ENCODE measurements at regions of chr20 and their contacts with region 1.

Region 1: DNA sequence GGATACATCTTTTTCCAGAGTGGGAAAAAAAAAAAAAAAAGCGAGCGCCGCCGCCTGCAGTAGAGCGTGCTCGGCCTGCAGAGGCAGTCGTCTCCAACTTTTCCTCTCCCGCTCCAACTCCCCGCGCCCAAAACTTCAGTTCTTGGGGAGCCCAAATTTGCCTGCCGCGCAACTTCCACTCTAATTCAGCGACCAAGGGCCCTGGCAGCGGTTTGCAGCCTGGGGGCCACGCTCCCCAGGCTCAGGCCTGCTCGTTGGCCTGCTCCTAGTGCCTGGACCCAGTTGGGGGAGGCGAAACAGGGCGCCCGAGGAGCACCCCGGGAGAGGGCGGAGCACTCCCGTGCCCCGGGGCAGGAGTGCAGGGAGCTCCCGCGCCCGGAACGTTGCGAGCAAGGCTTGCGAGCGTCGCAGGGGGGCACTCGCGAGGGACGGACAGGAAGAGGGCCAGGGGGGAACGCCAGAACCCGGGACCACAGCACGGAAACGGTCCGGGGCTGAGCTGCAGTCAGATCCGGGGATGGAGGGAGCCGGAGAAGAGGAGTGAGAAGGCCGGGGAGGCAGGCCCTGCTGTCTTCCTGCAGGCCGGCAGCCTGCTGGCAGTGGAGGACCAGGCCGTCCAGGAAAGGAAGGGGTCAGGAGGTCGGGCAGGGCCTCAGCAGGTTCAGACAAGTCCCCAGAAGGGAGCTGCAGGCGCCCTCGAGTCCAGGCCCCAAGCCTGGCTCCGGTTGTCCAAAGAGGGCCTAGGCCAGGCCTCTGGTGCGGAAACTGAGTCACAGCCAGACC is at the start of gene STX16:
- DNase-seq: peak; percentile 93
- H3K4me3 ChIP-seq: peak within 1 kb of the TSS; percentile 62 to 98 (median 92)
- H3K27ac ChIP-seq: peak within 1 kb of the TSS; percentile 96 to 99 (median 98)
- H3K4me1 ChIP-seq: peaks cover 10 to 37% (median 23%) of the 10 kb centered on the region in 4 donors
- H3K27me3 ChIP-seq: no peaks in the 10 kb centered on the region
- CTCF ChIP-seq: peak; percentile 54 to 90 (median 72)
- EP300 ChIP-seq: no peak
- POLR2A ChIP-seq: peak; percentile 87
- total RNA-seq, gene STX16: 52.3 to 146 (median 77.0) TPM

Region 2: GRCh38 chr20:58236612-58237330 is 414.2 kb before region 1 on chr20:
- in situ Hi-C with region 1: loop called in 2 of 4 experiments (anchors 25 kb)
- intact Hi-C with region 1: loop called (anchors 10 kb)
- DNase-seq: peak; percentile 74
- H3K4me3 ChIP-seq: peak overlapping the region; percentile 6 to 58 (median 42)
- H3K27ac ChIP-seq: peak overlapping the region in 3 of 4 donors; percentile 19 to 32 (median 28)
- H3K4me1 ChIP-seq: peaks cover 0 to 8% (median 0%) of the 10 kb centered on the region in 4 donors
- H3K27me3 ChIP-seq: no peaks in the 10 kb centered on the region
- CTCF ChIP-seq: peak; percentile 86 to 98 (median 96)
- EP300 ChIP-seq: no peak
- POLR2A ChIP-seq: no peak

Region 3: DNA sequence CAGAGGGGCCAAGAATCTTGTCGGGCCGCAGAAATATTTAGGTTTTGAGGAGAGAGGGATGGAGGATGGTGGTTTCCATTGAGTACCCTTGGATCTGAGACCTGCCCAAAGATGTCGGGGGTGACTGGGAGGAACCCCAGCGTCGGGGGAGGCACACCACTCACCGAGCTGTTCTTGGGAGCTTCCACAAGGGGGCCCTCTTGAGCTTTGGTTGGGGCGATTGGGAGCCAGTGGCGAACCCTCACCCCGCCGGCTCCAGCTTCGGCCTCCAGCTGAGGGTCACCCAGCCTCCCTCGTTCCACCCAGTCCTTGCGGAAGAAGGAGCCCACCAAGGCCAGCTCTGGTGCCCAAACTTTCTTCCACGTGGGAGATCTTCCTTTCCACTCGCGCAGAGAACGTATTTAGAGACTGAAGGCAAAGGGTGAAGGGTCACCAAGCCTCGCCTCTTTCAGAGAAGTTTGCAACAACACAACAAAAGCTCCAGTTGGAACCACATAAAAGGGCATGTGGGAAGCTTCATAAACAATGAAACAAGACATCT is 169.4 kb before region 1 on chr20:
- in situ Hi-C with region 1: no loop called
- intact Hi-C with region 1: loop called (anchors 2 kb)
- DNase-seq: peak; percentile 59
- H3K4me3 ChIP-seq: peak overlapping the region in 1 of 4 donors; percentile 18
- H3K27ac ChIP-seq: peak overlapping the region in 2 of 4 donors; percentile 50 to 59
- H3K4me1 ChIP-seq: peaks cover 6 to 9% (median 8%) of the 10 kb centered on the region in 4 donors
- H3K27me3 ChIP-seq: no peaks in the 10 kb centered on the region
- CTCF ChIP-seq: peak; percentile 60 to 84 (median 70)
- EP300 ChIP-seq: no peak
- POLR2A ChIP-seq: no peak

Region 4: GRCh38 chr20:58692594-58693226 is 41.7 kb after region 1 on chr20 and contains the start of gene NPEPL1:
- in situ Hi-C with region 1: no loop called
- intact Hi-C with region 1: loop called (anchors 2 kb)
- DNase-seq: peak; percentile 79
- H3K4me3 ChIP-seq: peak within 1 kb of the TSS; percentile 46 to 53 (median 48)
- H3K27ac ChIP-seq: peak within 1 kb of the TSS; percentile 87 to 96 (median 92)
- H3K4me1 ChIP-seq: peaks cover 15 to 34% (median 25%) of the 10 kb centered on the region in 4 donors
- H3K27me3 ChIP-seq: no peaks in the 10 kb centered on the region
- CTCF ChIP-seq: peak in 1 of 5 experiments; percentile 7
- EP300 ChIP-seq: no peak
- POLR2A ChIP-seq: no peak
- total RNA-seq, gene NPEPL1: 33.3 to 109 (median 66.9) TPM

Region 5: DNA sequence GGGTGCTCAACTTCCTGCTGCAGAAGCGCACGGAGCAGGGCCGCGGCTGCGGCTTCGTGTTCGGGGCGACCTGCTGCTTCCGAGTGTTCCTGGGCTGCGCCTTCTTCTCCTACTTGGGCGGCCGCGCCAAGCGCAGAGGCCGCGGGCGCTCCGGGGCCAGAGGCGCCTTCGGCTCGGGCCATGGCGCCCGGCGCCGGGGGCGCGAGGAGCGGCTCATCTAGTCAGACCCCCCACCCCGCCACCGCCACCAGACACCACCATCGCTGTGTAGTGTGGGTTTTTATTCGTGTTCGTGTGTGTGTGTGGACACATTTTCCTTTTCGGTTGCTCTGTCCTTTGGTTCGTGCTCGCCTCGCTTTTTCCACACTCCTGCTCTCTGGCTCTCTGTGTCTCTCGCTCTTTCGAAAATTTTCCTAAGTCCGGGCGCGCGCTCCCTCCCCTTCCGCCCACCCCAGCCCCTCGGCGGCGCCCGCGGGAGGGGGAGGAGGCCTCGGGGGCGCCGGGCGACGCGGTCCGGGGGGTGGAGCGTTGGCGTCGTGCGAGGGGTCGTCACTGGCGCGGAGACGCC is 239.6 kb after region 1 on chr20:
- in situ Hi-C with region 1: no loop called
- intact Hi-C with region 1: loop called (anchors 5 kb)
- DNase-seq: peak; percentile 75
- H3K4me3 ChIP-seq: peak overlapping the region; percentile 55 to 100 (median 90)
- H3K27ac ChIP-seq: peak overlapping the region; percentile 99 to 100 (median 100)
- H3K4me1 ChIP-seq: peaks cover 15 to 38% (median 25%) of the 10 kb centered on the region in 4 donors
- H3K27me3 ChIP-seq: no peaks in the 10 kb centered on the region
- CTCF ChIP-seq: no peak
- EP300 ChIP-seq: no peak
- POLR2A ChIP-seq: peak; percentile 50

Region 6: DNA sequence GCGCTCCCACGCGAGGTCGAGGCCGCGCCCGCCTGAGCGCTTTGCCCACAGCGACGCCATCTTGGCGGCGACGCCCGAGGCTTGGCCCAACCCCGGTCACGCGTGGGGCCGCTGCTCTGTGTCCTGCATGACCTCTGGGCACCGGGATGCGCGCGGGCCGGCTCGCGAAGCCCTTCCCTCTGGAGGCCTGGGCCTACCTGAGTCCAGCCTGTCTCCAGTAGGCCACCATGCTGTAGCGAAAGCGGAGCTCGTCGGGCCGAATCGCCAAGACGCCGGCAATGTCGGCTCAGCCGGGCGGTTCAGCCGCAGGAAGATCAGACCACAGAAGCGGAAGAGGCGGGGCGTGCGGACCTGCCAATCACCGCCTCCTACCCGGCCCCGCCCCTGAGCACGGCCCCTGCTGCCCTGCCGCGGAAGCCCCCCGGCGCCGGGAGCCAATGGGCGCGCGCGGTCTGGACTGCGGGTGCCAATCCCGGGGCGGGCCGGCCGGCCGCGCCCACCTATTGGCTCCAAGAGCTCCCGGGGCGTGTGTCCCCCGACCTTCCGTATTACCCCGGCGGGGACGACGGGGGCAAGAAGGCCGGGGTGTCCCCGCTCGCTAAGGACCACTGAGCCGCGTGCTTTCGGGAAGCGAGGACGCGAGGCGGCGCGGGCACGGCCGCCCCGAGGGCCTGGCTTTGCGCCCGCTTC is 381.2 kb after region 1 on chr20 and contains the start of gene ATP5F1E:
- in situ Hi-C with region 1: loop called in 1 of 4 experiments (anchors 25 kb)
- intact Hi-C with region 1: no loop called
- DNase-seq: peak; percentile 97
- H3K4me3 ChIP-seq: peak within 1 kb of the TSS; percentile 68 to 90 (median 69)
- H3K27ac ChIP-seq: peak within 1 kb of the TSS; percentile 90 to 98 (median 96)
- H3K4me1 ChIP-seq: peaks cover 26 to 57% (median 44%) of the 10 kb centered on the region in 4 donors
- H3K27me3 ChIP-seq: no peaks in the 10 kb centered on the region
- CTCF ChIP-seq: no peak
- EP300 ChIP-seq: no peak
- POLR2A ChIP-seq: peak; percentile 92
- total RNA-seq, gene ATP5F1E: 7.2 to 33.0 (median 25.8) TPM